ENCODE measurements at regions of chr12 and their contacts with region 1.

Region 1: GRCh38 chr12:100404769-100405407 is 48.0 kb downstream of the SLC17A8 start:
- DNase-seq: peak; percentile 11
- ATAC-seq: peak; percentile 94
- H3K4me3 ChIP-seq: no peak overlapping the region
- H3K27ac ChIP-seq: no peak overlapping the region
- H3K4me1 ChIP-seq: no peaks in the 10 kb centered on the region
- H3K27me3 ChIP-seq: no peaks in the 10 kb centered on the region; a peak in 1 of 4 replicates
- CTCF ChIP-seq: peak; percentile 65 to 70 (median 69)
- EP300 ChIP-seq: no peak
- POLR2A ChIP-seq: no peak
- RAD21 ChIP-seq: peak; percentile 54

Region 2: DNA sequence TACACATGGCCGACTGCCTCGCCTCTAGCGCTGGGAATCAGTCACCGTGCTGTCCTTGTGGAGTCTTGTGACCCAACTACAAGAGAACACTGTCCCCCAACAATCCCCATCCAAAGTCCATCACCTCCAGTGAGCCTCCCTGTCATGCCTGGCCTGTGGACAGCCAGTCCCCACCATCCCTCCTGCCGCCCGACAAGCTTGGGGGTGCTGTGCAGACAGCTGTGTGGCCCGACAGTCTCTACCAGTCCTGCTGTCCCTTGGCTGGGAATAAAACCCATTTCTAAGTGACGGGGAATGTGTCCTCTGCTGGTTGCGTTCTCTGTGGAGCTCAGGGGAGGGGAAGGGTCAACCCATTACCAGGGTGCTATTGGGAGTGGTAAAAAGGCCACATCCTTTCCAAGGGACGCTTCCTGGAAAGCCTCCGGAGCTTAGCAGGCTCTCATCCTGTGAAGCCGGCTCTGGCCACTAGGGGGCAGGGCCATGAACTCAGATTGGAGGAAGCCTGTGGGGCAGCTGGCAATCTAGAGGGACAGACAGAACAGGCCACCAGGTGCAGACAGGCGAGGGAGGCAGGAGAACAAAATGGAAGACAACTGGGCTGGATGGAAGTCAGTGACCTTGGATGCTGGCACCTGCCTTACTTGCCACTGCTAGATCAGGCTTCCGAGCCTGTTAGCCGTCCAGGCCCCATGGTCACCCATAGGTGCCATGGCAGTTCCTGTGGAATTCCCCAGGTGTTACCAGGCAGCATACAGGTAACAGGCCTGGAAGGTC is 250.2 kb before region 1 on chr12:
- CTCF ChIA-PET with region 1: interaction called, 16 read pairs
- POLR2A ChIA-PET with region 1: no interaction called
- RAD21 ChIA-PET with region 1: interaction called, 6 read pairs
- SMC1A ChIA-PET with region 1: interaction called, 6 read pairs
- in situ Hi-C with region 1: no loop called
- intact Hi-C with region 1: no loop called
- DNase-seq: no peak
- ATAC-seq: peak; percentile 91
- H3K4me3 ChIP-seq: no peak overlapping the region
- H3K27ac ChIP-seq: no peak overlapping the region
- H3K4me1 ChIP-seq: 0 out of 2 replicates have a peak, but pooled peaks cover 3% of the 10 kb centered on the region
- H3K27me3 ChIP-seq: no peaks in the 10 kb centered on the region
- CTCF ChIP-seq: peak; percentile 63 to 94 (median 91)
- EP300 ChIP-seq: no peak
- POLR2A ChIP-seq: no peak
- RAD21 ChIP-seq: peak; percentile 56

Region 3: DNA sequence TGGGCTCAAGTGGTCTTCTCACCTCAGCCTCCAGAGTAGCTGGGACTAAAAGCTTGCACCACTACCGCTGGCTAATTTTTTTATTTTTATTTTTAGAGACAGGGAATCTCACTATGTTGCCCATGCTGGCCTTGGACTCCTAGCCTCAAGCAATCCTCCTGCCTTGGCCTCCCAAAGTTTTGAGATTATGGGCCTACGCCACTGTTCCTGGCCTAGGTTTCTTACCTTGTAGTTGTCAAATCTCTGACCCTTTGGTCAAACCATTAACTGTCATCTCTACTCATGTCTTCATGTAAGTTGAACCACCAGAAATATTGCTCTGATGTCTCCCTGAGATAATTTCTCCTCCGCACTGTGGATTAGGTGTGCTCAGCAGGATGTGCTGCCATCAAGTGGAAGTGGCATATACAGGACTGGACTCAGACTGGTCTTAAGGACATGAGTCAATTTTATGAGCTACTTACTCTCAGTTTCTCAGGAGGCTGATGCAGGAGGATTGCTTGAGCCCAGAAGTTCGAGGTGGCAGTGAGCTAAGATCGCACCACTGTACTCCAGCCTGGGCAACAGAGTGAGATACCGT is 175.7 kb before region 1 on chr12:
- CTCF ChIA-PET with region 1: interaction called, 104 read pairs
- POLR2A ChIA-PET with region 1: no interaction called
- RAD21 ChIA-PET with region 1: interaction called, 57 read pairs
- SMC1A ChIA-PET with region 1: interaction called, 47 read pairs
- in situ Hi-C with region 1: loop called (anchors 10 kb)
- intact Hi-C with region 1: loop called (anchors 1 kb)
- DNase-seq: peak; percentile 1
- ATAC-seq: peak; percentile 57
- H3K4me3 ChIP-seq: no peak overlapping the region
- H3K27ac ChIP-seq: no peak overlapping the region
- H3K4me1 ChIP-seq: no peaks in the 10 kb centered on the region
- H3K27me3 ChIP-seq: no peaks in the 10 kb centered on the region
- CTCF ChIP-seq: peak in 2 of 3 experiments; percentile 19 to 20; a peak in 2 of 6 replicates
- EP300 ChIP-seq: no peak
- POLR2A ChIP-seq: no peak
- RAD21 ChIP-seq: peak; percentile 23; the same call in 1 of the 2 replicates

Region 4: DNA sequence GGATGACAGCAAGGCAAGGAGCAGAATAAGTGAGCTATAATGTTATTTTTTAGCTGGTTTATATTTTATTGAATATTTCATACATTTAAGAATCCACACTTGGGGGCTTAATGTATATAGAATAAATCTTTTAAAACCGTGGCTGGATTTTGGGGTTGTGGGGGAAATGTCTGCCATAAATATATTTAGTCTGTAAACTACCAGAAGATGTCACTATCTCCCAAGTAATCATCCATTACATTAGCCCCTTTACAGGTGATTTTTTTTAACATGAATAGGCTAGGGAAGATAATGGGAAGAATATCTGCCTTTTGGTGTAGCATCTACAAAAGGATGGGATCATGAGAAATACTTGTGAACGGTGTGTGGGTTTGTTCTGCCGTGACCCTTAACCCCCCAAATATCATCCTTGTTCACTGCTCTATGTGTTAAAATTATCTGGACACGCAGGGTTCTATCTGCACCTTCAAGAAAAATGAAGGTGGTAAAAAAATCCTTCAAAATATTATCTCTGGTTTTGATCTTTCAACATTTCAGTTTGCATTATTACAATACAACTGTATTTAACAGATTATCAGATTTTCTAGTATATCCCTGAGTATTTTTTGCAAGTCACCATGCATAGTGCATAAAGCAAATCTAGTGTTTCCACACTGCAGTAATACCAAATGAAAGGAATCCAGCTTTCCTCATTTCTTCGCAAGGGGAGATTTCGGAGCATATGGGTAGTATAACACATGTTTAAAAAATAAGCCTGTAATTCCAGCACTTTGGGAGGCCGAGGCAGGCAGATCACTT is 56.0 kb before region 1 on chr12:
- CTCF ChIA-PET with region 1: interaction called, 21 read pairs
- POLR2A ChIA-PET with region 1: no interaction called
- RAD21 ChIA-PET with region 1: interaction called, 8 read pairs
- SMC1A ChIA-PET with region 1: interaction called, 13 read pairs
- in situ Hi-C with region 1: no loop called
- intact Hi-C with region 1: no loop called
- DNase-seq: no peak
- ATAC-seq: peak; percentile 58; the same call in 2 of the 3 replicates
- H3K4me3 ChIP-seq: no peak overlapping the region
- H3K27ac ChIP-seq: no peak overlapping the region
- H3K4me1 ChIP-seq: no peaks in the 10 kb centered on the region
- H3K27me3 ChIP-seq: no peaks in the 10 kb centered on the region
- CTCF ChIP-seq: peak in 2 of 3 experiments; percentile 8 to 48; a peak in 2 of 6 replicates
- EP300 ChIP-seq: no peak
- POLR2A ChIP-seq: no peak
- RAD21 ChIP-seq: peak; percentile 59

Region 5: GRCh38 chr12:100391856-100392255 is 13.0 kb before region 1 on chr12:
- CTCF ChIA-PET with region 1: interaction called, 12 read pairs
- POLR2A ChIA-PET with region 1: interaction called, 3 read pairs
- RAD21 ChIA-PET with region 1: interaction called, 4 read pairs
- SMC1A ChIA-PET with region 1: interaction called, 5 read pairs
- in situ Hi-C with region 1: no loop called
- intact Hi-C with region 1: no loop called
- DNase-seq: no peak
- ATAC-seq: no peak
- H3K4me3 ChIP-seq: no peak overlapping the region
- H3K27ac ChIP-seq: no peak overlapping the region
- H3K4me1 ChIP-seq: no peaks in the 10 kb centered on the region
- H3K27me3 ChIP-seq: no peaks in the 10 kb centered on the region
- CTCF ChIP-seq: peak in 1 of 3 experiments; percentile 12; a peak in 1 of 6 replicates
- EP300 ChIP-seq: no peak
- POLR2A ChIP-seq: no peak
- RAD21 ChIP-seq: no peak

Region 6: DNA sequence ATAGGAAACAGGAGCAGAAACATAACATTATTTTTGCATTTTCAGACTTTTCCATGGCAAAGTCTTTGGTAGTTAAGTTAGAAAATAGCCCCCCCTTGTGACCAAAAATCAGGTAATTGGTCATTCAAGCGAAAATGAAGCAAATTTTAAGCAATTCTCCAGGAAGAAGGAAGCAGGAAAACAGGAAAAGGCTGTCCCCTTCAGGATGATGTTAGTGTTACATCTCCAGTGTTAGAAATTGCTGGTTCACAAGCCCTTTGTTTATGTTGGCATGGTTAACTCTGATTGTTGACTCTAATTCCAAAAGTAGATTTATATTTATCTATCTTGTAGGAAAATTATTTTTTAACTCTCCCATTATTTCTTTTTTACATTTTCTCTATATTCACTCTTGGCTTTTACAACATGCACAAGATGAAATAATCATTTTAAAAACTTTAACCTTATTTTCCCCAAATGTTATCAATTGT is 149.8 kb after region 1 on chr12:
- CTCF ChIA-PET with region 1: interaction called, 10 read pairs
- POLR2A ChIA-PET with region 1: no interaction called
- RAD21 ChIA-PET with region 1: interaction called, 6 read pairs
- SMC1A ChIA-PET with region 1: interaction called, 5 read pairs
- in situ Hi-C with region 1: no loop called
- intact Hi-C with region 1: no loop called
- DNase-seq: no peak
- ATAC-seq: peak; percentile 34; the same call in 2 of the 3 replicates
- H3K4me3 ChIP-seq: no peak overlapping the region
- H3K27ac ChIP-seq: no peak overlapping the region
- H3K4me1 ChIP-seq: no peaks in the 10 kb centered on the region
- H3K27me3 ChIP-seq: no peaks in the 10 kb centered on the region
- CTCF ChIP-seq: peak; percentile 44 to 59 (median 50); a peak in 5 of 6 replicates
- EP300 ChIP-seq: no peak
- POLR2A ChIP-seq: no peak
- RAD21 ChIP-seq: peak; percentile 63

Region 7: GRCh38 chr12:102033991-102034745 is 1629.3 kb after region 1 on chr12:
- CTCF ChIA-PET with region 1: no interaction called
- POLR2A ChIA-PET with region 1: no interaction called
- RAD21 ChIA-PET with region 1: no interaction called
- SMC1A ChIA-PET with region 1: no interaction called
- in situ Hi-C with region 1: no loop called
- intact Hi-C with region 1: no loop called
- DNase-seq: no peak
- ATAC-seq: no peak
- H3K4me3 ChIP-seq: no peak overlapping the region
- H3K27ac ChIP-seq: no peak overlapping the region
- H3K4me1 ChIP-seq: no peaks in the 10 kb centered on the region
- H3K27me3 ChIP-seq: no peaks in the 10 kb centered on the region
- CTCF ChIP-seq: no peak
- EP300 ChIP-seq: no peak
- POLR2A ChIP-seq: no peak
- RAD21 ChIP-seq: no peak